ENCODE measurements at regions of chr16 and their contacts with region 1.

Region 1: DNA sequence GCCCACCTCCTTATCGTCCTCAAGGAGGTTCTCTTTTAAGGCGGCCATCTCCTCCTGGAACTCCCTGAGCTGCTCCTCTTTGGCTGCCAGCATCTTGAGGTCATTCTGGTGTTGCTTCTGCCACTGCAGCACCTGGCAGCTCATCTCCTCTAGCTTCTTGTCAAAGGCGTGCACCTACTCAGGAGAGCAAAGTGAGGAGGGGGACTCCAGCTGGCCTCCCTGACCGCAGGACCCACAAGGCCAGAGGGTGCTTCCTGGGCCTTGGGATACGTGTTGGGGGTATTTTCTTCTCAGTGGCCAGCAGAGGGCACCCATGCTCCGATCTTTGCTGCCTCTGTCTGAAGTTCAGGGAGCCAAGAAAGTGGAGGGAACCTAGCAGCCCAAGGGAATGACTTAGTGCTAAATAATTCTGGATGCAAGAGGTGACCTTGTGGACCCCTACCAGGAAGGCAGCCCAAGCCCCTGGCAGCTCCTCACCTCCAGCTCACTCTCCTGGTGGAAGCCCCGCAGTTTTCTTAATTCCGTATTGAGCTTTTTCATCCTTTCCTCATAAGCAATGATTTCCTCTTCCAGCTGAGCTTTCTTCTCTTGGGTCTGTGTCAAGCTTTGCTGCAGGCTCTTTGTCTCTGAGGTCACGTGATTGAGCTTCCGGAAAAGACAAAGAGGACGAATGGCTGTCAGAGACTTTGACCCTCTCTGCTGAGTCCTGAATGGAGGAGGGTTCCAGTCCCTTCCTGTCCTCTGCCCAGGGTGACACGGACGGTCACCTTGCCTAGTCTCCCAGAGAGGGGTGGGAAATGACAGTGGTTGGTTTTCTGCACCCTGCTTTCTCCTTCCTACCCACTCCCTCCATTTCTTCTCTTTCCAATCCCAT is 31.4 kb downstream of the DHX38 start:
- DNase-seq: peak; percentile 80
- H3K4me3 Mint-ChIP-seq: no peak overlapping the region
- H3K27ac Mint-ChIP-seq: no peak overlapping the region
- H3K4me1 Mint-ChIP-seq: no peaks in the 10 kb centered on the region
- H3K27me3 Mint-ChIP-seq: no peaks in the 10 kb centered on the region

Region 2: DNA sequence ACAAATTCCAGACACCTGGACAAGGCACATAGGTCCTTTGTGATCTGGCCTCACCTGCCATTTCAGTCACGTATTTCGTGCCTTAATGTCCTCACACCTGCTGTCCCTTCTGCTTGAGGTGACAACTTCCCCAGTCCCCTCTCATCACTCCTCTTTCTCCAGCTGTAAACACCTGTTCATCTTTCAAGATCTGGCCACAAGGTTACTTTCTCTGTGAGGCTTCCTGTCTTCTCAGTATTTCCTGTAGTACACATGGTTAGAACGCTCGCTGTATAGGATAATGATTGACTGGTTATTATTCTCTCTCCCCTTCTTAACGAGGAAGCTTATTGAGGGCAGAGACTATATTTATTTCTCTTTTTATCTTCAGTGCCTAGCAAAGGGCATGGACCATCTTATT is 121.4 kb after region 1 on chr16:
- CTCF ChIA-PET with region 1: no interaction called
- intact Hi-C with region 1: loop called (anchors 5 kb)
- DNase-seq: no peak
- H3K4me3 Mint-ChIP-seq: no peak overlapping the region
- H3K27ac Mint-ChIP-seq: no peak overlapping the region
- H3K4me1 Mint-ChIP-seq: peaks cover 4% of the 10 kb centered on the region
- H3K27me3 Mint-ChIP-seq: no peaks in the 10 kb centered on the region

Region 3: GRCh38 chr16:72442385-72443158 is 317.6 kb after region 1 on chr16:
- CTCF ChIA-PET with region 1: no interaction called
- intact Hi-C with region 1: no loop called
- DNase-seq: no peak
- H3K4me3 Mint-ChIP-seq: no peak overlapping the region
- H3K27ac Mint-ChIP-seq: no peak overlapping the region
- H3K4me1 Mint-ChIP-seq: no peaks in the 10 kb centered on the region
- H3K27me3 Mint-ChIP-seq: no peaks in the 10 kb centered on the region

Region 4: GRCh38 chr16:72467157-72467759 is 342.3 kb after region 1 on chr16:
- CTCF ChIA-PET with region 1: interaction called, 19 read pairs
- intact Hi-C with region 1: loop called (anchors 1 kb)
- DNase-seq: no peak
- H3K4me3 Mint-ChIP-seq: no peak overlapping the region
- H3K27ac Mint-ChIP-seq: no peak overlapping the region
- H3K4me1 Mint-ChIP-seq: no peaks in the 10 kb centered on the region
- H3K27me3 Mint-ChIP-seq: no peaks in the 10 kb centered on the region

Region 5: GRCh38 chr16:72856797-72857196 is 731.8 kb after region 1 on chr16:
- CTCF ChIA-PET with region 1: interaction called, 3 read pairs
- intact Hi-C with region 1: loop called (anchors 5 kb)
- DNase-seq: peak; percentile 35
- H3K4me3 Mint-ChIP-seq: no peak overlapping the region
- H3K27ac Mint-ChIP-seq: no peak overlapping the region
- H3K4me1 Mint-ChIP-seq: no peaks in the 10 kb centered on the region
- H3K27me3 Mint-ChIP-seq: no peaks in the 10 kb centered on the region

Measured in activated naive CD4-positive, alpha-beta T cell treated with anti-CD3 and anti-CD28 coated beads for 36 hours (primary cell).